CD8-positive, alpha-beta memory T cell (primary cell): ENCODE measurements at regions of chr17 and their contacts with region 1.

Region 1: DNA sequence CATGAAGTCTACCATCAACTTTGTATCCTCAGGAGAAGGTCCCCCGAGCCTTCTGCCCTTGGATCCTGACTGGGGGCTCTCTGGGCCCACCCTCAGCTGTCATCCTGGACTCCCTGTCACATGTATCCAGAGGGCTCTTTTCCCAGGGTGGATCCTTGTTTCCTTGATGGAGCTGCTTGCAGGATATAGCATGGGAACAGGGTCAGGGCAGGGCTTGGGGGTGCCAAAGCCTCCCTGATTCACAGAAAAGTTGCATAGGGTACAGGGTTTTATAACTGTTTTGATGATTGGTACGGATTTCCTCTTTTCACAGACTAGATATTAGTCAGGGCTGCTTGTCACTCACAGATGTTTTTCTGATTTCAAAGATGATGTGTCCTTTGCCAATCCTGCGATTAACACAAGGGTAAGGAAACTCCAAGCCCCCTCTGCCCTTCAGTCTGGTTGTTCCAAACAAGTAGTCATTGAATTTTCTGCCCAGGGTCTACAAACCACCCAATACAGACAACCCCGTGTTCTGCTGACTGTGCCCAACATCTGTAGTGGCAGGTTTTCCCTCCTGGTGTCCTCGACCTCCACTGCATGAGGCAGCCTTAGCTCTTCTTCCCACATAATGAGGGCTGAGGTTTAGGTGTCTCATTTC is 20.6 kb upstream of the SLC35G3 start:
- DNase-seq: peak in 1 of 5 donors; percentile 6
- H3K4me3 ChIP-seq: peak overlapping the region; percentile 61
- H3K4me3 Mint-ChIP-seq: peak overlapping the region; percentile 15 to 87 (median 81)
- H3K27ac ChIP-seq: peak overlapping the region; percentile 40
- H3K27ac Mint-ChIP-seq: peak overlapping the region; percentile 41 to 99 (median 94)
- H3K4me1 ChIP-seq: peaks cover 93% of the 10 kb centered on the region
- H3K4me1 Mint-ChIP-seq: peaks cover 79 to 95% (median 92%) of the 10 kb centered on the region in 3 donors
- H3K27me3 ChIP-seq: no peaks in the 10 kb centered on the region
- H3K27me3 Mint-ChIP-seq: no peaks in the 10 kb centered on the region

Region 2: GRCh38 chr17:35161281-35161761 is 53.4 kb before region 1 on chr17:
- CTCF ChIA-PET with region 1: no interaction called
- POLR2A ChIA-PET with region 1: interaction called, 10 read pairs
- DNase-seq: peak in 2 of 5 donors; percentile 50 to 57
- H3K4me3 ChIP-seq: peak overlapping the region; percentile 43
- H3K4me3 Mint-ChIP-seq: peak overlapping the region; percentile 61 to 78 (median 75)
- H3K27ac ChIP-seq: peak overlapping the region; percentile 53
- H3K27ac Mint-ChIP-seq: peak overlapping the region; percentile 82 to 96 (median 90)
- H3K4me1 ChIP-seq: peaks cover 57% of the 10 kb centered on the region
- H3K4me1 Mint-ChIP-seq: peaks cover 43 to 58% (median 55%) of the 10 kb centered on the region in 3 donors
- H3K27me3 ChIP-seq: no peaks in the 10 kb centered on the region
- H3K27me3 Mint-ChIP-seq: peaks cover 0 to 2% of the 10 kb centered on the region in 2 donors

Region 3: DNA sequence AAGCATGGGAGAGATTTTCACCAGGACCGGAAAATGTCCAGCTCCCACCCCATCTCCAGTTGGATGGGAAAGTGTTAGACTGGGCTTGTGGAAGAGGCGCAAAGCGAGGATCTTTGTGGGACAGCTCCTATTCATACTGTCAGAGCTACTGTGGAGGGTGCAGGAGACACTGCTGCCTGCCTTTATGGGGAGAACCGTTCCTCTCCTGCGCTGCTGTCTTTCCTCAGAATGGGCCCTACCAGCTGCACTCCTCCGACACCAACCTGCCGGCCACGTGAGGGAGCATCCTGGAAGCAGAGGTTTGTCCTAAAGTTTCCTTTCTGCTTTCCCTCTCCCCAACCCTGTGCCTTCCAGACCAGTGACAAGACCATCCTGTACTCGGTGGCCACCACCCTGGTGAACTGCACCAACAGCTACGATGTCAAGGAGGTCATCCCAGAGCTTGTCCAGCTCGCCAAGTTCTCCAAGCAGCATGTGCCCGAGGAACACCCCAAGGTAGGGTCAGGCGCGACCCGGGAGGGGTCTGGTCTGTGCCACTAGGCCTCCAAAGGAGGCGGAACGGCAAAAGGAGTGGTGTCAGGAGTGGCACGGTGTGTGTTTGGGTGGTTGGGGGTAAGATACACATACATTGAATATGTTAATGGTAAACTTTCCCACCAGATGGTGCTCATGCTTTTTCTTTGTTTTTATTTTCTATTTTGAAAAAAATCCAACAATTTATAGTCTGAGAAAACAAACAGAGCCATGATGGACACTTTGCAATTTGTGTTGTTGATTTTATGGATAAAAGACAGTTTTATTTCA is 43.6 kb before region 1 on chr17:
- CTCF ChIA-PET with region 1: interaction called, 12 read pairs
- POLR2A ChIA-PET with region 1: interaction called, 3 read pairs
- DNase-seq: peak in 3 of 5 donors; percentile 63 to 70 (median 65)
- H3K4me3 ChIP-seq: no peak overlapping the region
- H3K4me3 Mint-ChIP-seq: peak overlapping the region; percentile 22 to 77 (median 74)
- H3K27ac ChIP-seq: no peak overlapping the region
- H3K27ac Mint-ChIP-seq: peak overlapping the region; percentile 63 to 96 (median 88)
- H3K4me1 ChIP-seq: peaks cover 39% of the 10 kb centered on the region
- H3K4me1 Mint-ChIP-seq: peaks cover 41 to 51% (median 47%) of the 10 kb centered on the region in 3 donors
- H3K27me3 ChIP-seq: no peaks in the 10 kb centered on the region
- H3K27me3 Mint-ChIP-seq: no peaks in the 10 kb centered on the region

Region 4: GRCh38 chr17:35242805-35243560 is 28.2 kb after region 1 on chr17 and contains the start of gene SLFN5:
- CTCF ChIA-PET with region 1: interaction called, 27 read pairs
- POLR2A ChIA-PET with region 1: interaction called, 68 read pairs
- DNase-seq: peak; percentile 88 to 96 (median 92)
- H3K4me3 ChIP-seq: peak within 1 kb of the TSS; percentile 99
- H3K4me3 Mint-ChIP-seq: peak within 1 kb of the TSS; percentile 97 to 100 (median 99)
- H3K27ac ChIP-seq: peak within 1 kb of the TSS; percentile 96
- H3K27ac Mint-ChIP-seq: peak within 1 kb of the TSS; percentile 98 to 100 (median 99)
- H3K4me1 ChIP-seq: peaks cover 33% of the 10 kb centered on the region
- H3K4me1 Mint-ChIP-seq: peaks cover 64 to 70% (median 68%) of the 10 kb centered on the region in 3 donors
- H3K27me3 ChIP-seq: no peaks in the 10 kb centered on the region
- H3K27me3 Mint-ChIP-seq: peaks cover 0 to 8% of the 10 kb centered on the region in 2 donors
- total RNA-seq, gene SLFN5: 28.6 to 30.2 TPM

Region 5: GRCh38 chr17:35407531-35407930 is 192.8 kb after region 1 on chr17:
- CTCF ChIA-PET with region 1: no interaction called
- POLR2A ChIA-PET with region 1: no interaction called
- DNase-seq: no peak
- H3K4me3 ChIP-seq: no peak overlapping the region
- H3K4me3 Mint-ChIP-seq: no peak overlapping the region
- H3K27ac ChIP-seq: no peak overlapping the region
- H3K27ac Mint-ChIP-seq: peak overlapping the region in 1 of 8 donors; percentile 43
- H3K4me1 ChIP-seq: no peaks in the 10 kb centered on the region
- H3K4me1 Mint-ChIP-seq: peaks cover 6 to 8% (median 8%) of the 10 kb centered on the region in 3 donors
- H3K27me3 ChIP-seq: no peaks in the 10 kb centered on the region
- H3K27me3 Mint-ChIP-seq: peaks cover 0 to 1% of the 10 kb centered on the region in 2 donors

Region 6: GRCh38 chr17:35540589-35541404 is 326.0 kb after region 1 on chr17:
- CTCF ChIA-PET with region 1: interaction called, 7 read pairs
- POLR2A ChIA-PET with region 1: interaction called, 11 read pairs
- DNase-seq: peak in 4 of 5 donors; percentile 23 to 58 (median 43)
- H3K4me3 ChIP-seq: peak overlapping the region; percentile 71
- H3K4me3 Mint-ChIP-seq: peak overlapping the region; percentile 85 to 95 (median 91)
- H3K27ac ChIP-seq: peak overlapping the region; percentile 74
- H3K27ac Mint-ChIP-seq: peak overlapping the region; percentile 91 to 100 (median 97)
- H3K4me1 ChIP-seq: peaks cover 37% of the 10 kb centered on the region
- H3K4me1 Mint-ChIP-seq: peaks cover 43 to 57% (median 51%) of the 10 kb centered on the region in 3 donors
- H3K27me3 ChIP-seq: no peaks in the 10 kb centered on the region
- H3K27me3 Mint-ChIP-seq: no peaks in the 10 kb centered on the region